Testis (tissue), 5 donors: ENCODE measurements at regions of chr4 and their contacts with region 1.

Region 1: GRCh38 chr4:88706574-88706973 is 8.9 kb upstream of the NAP1L5 start:
- DNase-seq: peak; percentile 51
- H3K4me3 ChIP-seq: no peak overlapping the region
- H3K27ac ChIP-seq: peak overlapping the region in 1 of 2 donors; percentile 17
- H3K4me1 ChIP-seq: peaks cover 4% of the 10 kb centered on the region
- H3K27me3 ChIP-seq: no peaks in the 10 kb centered on the region
- CTCF ChIP-seq: peak; percentile 17 to 73 (median 62)
- POLR2A ChIP-seq: no peak

Region 2: GRCh38 chr4:88369936-88370335 is 336.6 kb before region 1 on chr4:
- intact Hi-C with region 1: no loop called
- DNase-seq: no peak
- H3K4me3 ChIP-seq: no peak overlapping the region
- H3K27ac ChIP-seq: no peak overlapping the region
- H3K4me1 ChIP-seq: no peaks in the 10 kb centered on the region
- H3K27me3 ChIP-seq: no peaks in the 10 kb centered on the region
- CTCF ChIP-seq: no peak
- POLR2A ChIP-seq: no peak

Region 3: DNA sequence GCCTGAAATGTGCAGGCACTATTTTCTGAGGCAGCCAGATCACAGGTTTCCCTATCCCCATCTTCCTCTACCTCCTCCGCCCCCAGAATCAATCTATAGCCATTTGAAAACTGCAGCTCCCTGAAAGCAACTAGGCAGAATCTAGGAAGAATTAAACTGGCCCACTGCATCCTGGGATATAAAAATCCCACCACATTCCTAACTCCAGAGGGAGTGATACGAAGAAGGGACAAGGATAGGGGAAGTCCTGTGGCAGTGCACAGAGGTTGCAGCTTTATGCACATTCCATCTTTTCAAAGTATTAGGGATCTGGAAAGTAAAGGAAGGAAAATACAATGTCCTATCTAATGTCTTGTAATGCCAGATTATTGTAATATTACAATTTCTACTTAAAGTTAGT is 132.6 kb before region 1 on chr4:
- intact Hi-C with region 1: no loop called
- DNase-seq: no peak
- H3K4me3 ChIP-seq: no peak overlapping the region
- H3K27ac ChIP-seq: no peak overlapping the region
- H3K4me1 ChIP-seq: no peaks in the 10 kb centered on the region
- H3K27me3 ChIP-seq: no peaks in the 10 kb centered on the region
- CTCF ChIP-seq: no peak
- POLR2A ChIP-seq: no peak

Region 4: DNA sequence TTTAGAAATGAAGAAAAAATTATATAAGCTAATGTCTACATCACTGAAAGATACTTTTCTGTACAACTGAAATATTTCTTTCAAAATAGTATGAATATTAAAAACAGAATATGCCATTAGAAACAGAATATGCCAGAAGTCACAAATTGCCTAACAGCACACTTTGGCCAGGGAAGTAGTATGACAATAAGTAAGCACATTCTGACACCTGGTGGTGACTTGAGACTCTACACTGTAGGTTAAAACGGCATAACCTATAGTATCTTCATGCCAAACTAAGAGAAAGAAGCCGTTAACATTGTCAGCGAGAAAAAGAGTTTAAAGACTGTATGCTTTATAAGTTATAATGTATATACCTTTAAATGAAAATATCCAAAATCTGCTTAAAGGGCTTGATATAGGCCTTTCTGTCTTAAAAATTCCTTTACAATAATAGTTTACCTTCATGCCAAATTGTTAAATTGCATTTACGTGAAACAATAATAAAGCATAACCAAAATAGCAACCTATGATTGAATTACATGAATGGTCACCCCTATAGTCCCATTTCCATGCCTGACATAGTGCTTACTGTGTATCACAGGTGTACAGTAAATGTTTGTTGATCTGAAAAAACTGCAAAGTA is 317.6 kb after region 1 on chr4:
- intact Hi-C with region 1: loop called (anchors 10 kb)
- DNase-seq: peak; percentile 81
- H3K4me3 ChIP-seq: no peak overlapping the region
- H3K27ac ChIP-seq: no peak overlapping the region
- H3K4me1 ChIP-seq: no peaks in the 10 kb centered on the region
- H3K27me3 ChIP-seq: no peaks in the 10 kb centered on the region
- CTCF ChIP-seq: peak; percentile 80 to 91 (median 85)
- POLR2A ChIP-seq: no peak

Region 5: GRCh38 chr4:89307446-89308160 is 601.0 kb after region 1 on chr4 and contains the start of gene GPRIN3:
- intact Hi-C with region 1: no loop called
- DNase-seq: peak; percentile 50
- H3K4me3 ChIP-seq: peak within 1 kb of the TSS; percentile 58 to 81
- H3K27ac ChIP-seq: peak within 1 kb of the TSS; percentile 50 to 68
- H3K4me1 ChIP-seq: no peaks in the 10 kb centered on the region
- H3K27me3 ChIP-seq: no peaks in the 10 kb centered on the region
- CTCF ChIP-seq: no peak
- POLR2A ChIP-seq: no peak
- total RNA-seq, gene GPRIN3: 2.2 to 2.5 TPM